Sciatic nerve (tissue), 2 donors: ENCODE measurements at regions of chr17 and their contacts with region 1.

Region 1: DNA sequence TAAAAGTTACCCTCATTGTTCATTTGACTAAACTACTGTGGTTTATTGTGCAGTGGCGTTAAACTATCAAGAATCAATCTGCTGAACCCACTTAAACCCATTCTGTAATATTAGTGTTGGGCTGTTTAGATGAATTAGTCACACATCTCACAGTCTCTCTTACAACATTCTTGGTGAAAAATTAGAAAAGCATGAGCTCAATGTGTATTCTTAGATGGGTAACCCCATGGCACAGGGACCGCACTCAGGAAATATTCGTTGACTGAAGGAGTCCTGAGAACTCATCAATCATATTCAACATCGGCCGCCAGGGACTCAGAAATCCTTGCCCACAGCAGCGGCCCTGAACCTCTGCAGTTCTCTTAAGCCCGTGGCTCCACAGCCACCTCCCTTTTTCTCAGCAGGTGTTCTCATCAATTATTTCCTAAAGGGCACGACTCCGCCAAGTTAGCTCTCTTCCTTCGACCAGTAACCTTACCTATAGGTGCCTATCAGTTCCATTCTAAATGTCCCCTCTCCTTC is 155.6 kb downstream of the STX8 start:
- DNase-seq: no peak
- ATAC-seq: no peak

Region 2: GRCh38 chr17:9465210-9465921 is 45.4 kb after region 1 on chr17:
- intact Hi-C with region 1: loop called (anchors 5 kb)
- DNase-seq: no peak
- ATAC-seq: no peak

Region 3: GRCh38 chr17:10394201-10394887 is 974.4 kb after region 1 on chr17:
- intact Hi-C with region 1: no loop called
- DNase-seq: no peak
- ATAC-seq: no peak